ENCODE measurements at regions of chr16 and their contacts with region 1.

Region 1: DNA sequence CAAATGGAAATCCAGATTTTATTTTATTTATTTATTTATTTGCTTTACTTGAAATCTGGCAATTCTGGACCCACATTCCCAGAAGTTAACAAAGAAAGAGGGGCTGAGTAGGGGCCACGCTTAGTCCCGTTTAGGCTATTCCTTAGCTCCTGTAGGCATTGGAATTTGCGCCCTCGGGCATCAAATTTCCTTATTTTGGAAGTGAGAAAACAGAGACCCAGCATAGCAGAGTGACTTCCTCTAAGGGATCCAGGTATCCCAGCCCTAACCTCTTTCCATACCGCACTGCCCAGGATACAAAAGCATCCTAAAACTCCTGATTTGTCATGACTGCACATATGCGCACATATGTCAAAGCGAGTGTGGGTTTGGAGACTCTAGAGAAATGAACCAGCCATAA is 19.0 kb upstream of the SMG1 start:
- DNase-seq: no peak
- ATAC-seq: no peak
- H3K4me3 ChIP-seq: no peak overlapping the region; the same call in 2 of the 3 replicates
- H3K27ac ChIP-seq: peak overlapping the region in 1 of 2 experiments; percentile 87; a peak in 2 of 6 replicates
- H3K4me1 ChIP-seq: 0 out of 3 replicates have a peak, but pooled peaks cover 3% of the 10 kb centered on the region
- CTCF ChIP-seq: no peak
- EP300 ChIP-seq: no peak
- POLR2A ChIP-seq: no peak
- RAD21 ChIP-seq: no peak

Region 2: DNA sequence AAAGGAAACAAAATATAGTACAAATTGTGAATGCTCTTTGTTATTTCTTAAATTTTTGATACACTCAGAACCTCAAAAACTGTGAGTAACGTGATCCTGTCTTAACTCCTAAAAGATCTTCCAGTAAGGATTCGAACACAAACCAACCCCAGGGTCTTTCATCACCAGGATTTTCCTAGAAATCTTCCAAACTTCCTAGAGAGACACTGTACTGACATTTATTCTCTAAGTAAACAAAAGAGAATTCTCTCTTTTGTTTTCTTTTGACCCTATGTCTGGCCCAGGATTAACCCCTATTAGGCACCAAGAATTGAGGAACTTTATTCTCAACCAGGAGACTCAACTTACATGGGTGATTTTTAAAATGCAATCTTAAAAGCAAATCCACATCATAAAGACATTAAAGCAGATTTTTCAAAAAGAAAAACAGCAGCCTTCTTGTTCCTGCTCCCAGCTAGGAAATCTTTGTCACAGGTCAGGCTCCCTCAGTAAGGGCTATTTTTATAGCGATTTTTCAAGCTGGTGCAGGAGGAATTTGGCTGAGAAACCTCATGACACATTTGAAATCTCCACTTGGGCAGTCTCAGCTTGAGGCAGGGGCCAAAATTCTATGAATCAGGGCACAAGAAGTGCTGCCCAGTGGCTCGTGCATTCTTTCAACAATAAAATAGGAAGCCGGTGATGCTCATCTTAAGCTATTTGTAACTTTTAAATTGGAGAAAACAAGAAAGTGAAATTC is 12.8 kb before region 1 on chr16:
- CTCF ChIA-PET with region 1: interaction called, 14 read pairs
- POLR2A ChIA-PET with region 1: no interaction called
- DNase-seq: no peak
- ATAC-seq: peak in 1 of 2 experiments; percentile 24; a peak in 2 of 6 replicates
- H3K4me3 ChIP-seq: no peak overlapping the region
- H3K27ac ChIP-seq: peak overlapping the region in 1 of 2 experiments; percentile 1; a peak in 1 of 6 replicates
- H3K4me1 ChIP-seq: peaks cover 16% of the 10 kb centered on the region
- CTCF ChIP-seq: no peak
- EP300 ChIP-seq: no peak
- POLR2A ChIP-seq: no peak
- RAD21 ChIP-seq: no peak

Region 3: GRCh38 chr16:18959031-18959505 is 13.8 kb after region 1 on chr16:
- CTCF ChIA-PET with region 1: interaction called, 34 read pairs
- POLR2A ChIA-PET with region 1: no interaction called
- DNase-seq: no peak
- ATAC-seq: peak in 1 of 2 experiments; percentile 24; a peak in 2 of 6 replicates
- H3K4me3 ChIP-seq: no peak overlapping the region
- H3K27ac ChIP-seq: no peak overlapping the region
- H3K4me1 ChIP-seq: no peaks in the 10 kb centered on the region
- CTCF ChIP-seq: no peak
- EP300 ChIP-seq: no peak
- POLR2A ChIP-seq: no peak
- RAD21 ChIP-seq: no peak

Region 4: GRCh38 chr16:19184823-19185509 is 239.7 kb after region 1 on chr16:
- CTCF ChIA-PET with region 1: no interaction called
- POLR2A ChIA-PET with region 1: no interaction called
- DNase-seq: no peak
- ATAC-seq: no peak
- H3K4me3 ChIP-seq: no peak overlapping the region
- H3K27ac ChIP-seq: 0 out of 6 replicates have a peak overlapping the region, but pooled peaks of 1 of the 2 experiments have one; percentile 3
- H3K4me1 ChIP-seq: peaks cover 16% of the 10 kb centered on the region
- CTCF ChIP-seq: no peak
- EP300 ChIP-seq: no peak
- POLR2A ChIP-seq: no peak
- RAD21 ChIP-seq: no peak

Measured in A549 (cell line).